Activated B cell treated with CpG ODN at 0.5 μM for 24 hours (primary cell): ENCODE measurements at regions of chr11 and their contacts with region 1.

Region 1: GRCh38 chr11:47269002-47269828 is 718 bp upstream of the MADD start:
- DNase-seq: peak; percentile 88
- ATAC-seq: peak; percentile 62
- H3K4me3 Mint-ChIP-seq: peak overlapping the region; percentile 93
- H3K27ac Mint-ChIP-seq: peak overlapping the region; percentile 97
- H3K4me1 Mint-ChIP-seq: peaks cover 59% of the 10 kb centered on the region
- H3K27me3 Mint-ChIP-seq: no peaks in the 10 kb centered on the region
- CTCF ChIP-seq: no peak

Region 2: DNA sequence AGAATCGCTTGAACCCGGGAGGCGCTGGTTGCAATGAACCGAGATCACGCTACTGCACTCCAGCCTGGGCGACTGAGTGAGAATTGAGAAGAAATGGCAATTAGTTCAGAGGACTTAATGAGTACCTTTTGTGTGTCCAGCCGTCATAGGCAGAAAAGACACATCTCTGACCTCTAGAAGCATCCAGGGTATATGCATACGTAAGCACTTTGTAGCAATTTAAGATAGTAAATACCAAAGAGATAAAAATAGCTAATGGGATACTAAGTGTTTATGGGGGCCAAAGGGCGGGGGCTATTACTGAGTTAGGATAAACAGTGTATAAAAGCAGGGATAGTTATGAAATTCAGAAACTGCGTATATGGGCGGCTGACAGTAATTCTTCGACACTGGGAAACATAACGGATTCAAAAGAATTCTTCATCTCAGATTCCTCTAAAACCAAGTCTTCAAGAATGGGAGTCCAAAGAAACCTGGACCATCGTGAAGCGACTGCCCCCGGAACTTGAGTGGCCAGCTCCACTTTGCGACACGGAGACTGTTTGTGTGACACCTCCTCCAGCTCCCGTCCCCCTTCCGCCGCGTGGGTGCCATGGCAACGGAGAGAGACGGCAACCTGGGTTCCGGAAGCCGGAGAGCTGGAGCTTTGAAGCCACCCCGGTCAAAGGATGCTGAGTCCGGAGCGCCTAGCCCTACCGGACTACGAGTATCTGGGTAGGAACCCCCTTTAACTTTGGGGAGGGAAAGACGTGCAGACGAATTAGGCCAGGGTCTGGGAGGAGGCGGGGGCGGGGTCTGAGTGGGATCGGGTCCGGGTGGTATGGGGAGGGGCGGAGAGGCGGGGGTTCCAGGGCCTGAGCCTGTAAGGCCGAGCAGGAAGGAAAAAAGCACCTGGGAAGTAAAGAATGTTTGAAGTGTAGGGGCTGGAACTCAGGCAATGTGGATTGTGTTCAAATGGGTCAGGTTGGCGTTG is 332.8 kb before region 1 on chr11 and contains the start of gene CSTPP1:
- CTCF ChIA-PET with region 1: no interaction called
- POLR2A ChIA-PET with region 1: no interaction called
- intact Hi-C with region 1: loop called (anchors 2 kb)
- DNase-seq: peak; percentile 88
- ATAC-seq: peak; percentile 97
- H3K4me3 Mint-ChIP-seq: peak within 1 kb of the TSS; percentile 99
- H3K27ac Mint-ChIP-seq: peak within 1 kb of the TSS; percentile 93
- H3K4me1 Mint-ChIP-seq: peaks cover 17% of the 10 kb centered on the region
- H3K27me3 Mint-ChIP-seq: peaks cover 10% of the 10 kb centered on the region
- CTCF ChIP-seq: no peak
- total RNA-seq, gene CSTPP1: 26.2 and 29.9 TPM in 2 replicates

Region 3: GRCh38 chr11:47248664-47249377 is 20.4 kb before region 1 on chr11 and contains the start of gene ACP2:
- CTCF ChIA-PET with region 1: interaction called, 4 read pairs
- POLR2A ChIA-PET with region 1: interaction called, 17 read pairs
- intact Hi-C with region 1: loop called (anchors 1 kb)
- DNase-seq: peak; percentile 82
- ATAC-seq: peak; percentile 96
- H3K4me3 Mint-ChIP-seq: peak within 1 kb of the TSS; percentile 98
- H3K27ac Mint-ChIP-seq: peak within 1 kb of the TSS; percentile 98
- H3K4me1 Mint-ChIP-seq: peaks cover 21% of the 10 kb centered on the region
- H3K27me3 Mint-ChIP-seq: no peaks in the 10 kb centered on the region
- CTCF ChIP-seq: no peak
- total RNA-seq, gene ACP2: 18.7 and 22.5 TPM in 2 replicates

Region 4: GRCh38 chr11:47399860-47400767 is 130.9 kb after region 1 on chr11:
- CTCF ChIA-PET with region 1: no interaction called
- POLR2A ChIA-PET with region 1: interaction called, 4 read pairs
- intact Hi-C with region 1: loop called (anchors 2 kb)
- DNase-seq: peak; percentile 56
- ATAC-seq: peak; percentile 79
- H3K4me3 Mint-ChIP-seq: peak overlapping the region; percentile 88
- H3K27ac Mint-ChIP-seq: peak overlapping the region; percentile 95
- H3K4me1 Mint-ChIP-seq: peaks cover 47% of the 10 kb centered on the region
- H3K27me3 Mint-ChIP-seq: no peaks in the 10 kb centered on the region
- CTCF ChIP-seq: no peak

Region 5: DNA sequence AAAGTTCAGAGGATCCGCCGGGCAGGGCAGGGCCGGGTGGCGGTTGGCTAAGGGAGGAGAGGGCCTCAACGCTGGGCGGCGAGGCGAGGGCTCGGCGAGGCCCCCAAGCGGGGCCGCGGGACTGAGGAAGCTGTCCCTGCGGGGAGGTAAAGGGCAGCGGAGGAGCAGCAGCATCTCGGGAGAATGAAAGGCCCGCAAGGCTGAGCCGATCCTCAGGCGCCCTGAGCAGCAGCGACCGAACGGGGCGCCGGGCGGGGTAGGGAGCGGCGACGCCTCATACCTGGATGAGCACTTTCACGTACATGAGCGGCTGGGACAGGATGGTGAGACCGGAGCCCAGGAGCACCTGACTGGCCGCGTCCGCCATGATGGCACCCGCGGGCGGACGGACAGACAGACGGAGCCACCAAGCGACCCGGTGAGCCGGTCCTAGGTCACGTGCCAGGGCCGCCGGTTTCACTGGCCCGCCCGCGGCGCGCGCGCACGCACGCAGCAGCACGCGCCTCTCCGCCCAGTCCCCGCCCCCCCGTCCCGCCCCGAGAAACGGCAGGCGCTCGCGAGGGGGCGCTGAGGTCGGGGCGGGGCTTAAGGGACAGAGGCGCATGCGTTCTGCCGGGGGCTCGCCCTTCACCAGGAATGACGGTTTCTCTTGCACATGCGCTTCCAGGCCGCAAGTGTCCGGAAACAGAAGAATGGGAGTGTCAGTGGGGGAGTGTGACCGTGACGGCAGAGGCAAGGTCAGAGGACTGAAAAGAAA is 373.1 kb after region 1 on chr11 and contains the start of gene MTCH2:
- CTCF ChIA-PET with region 1: no interaction called
- POLR2A ChIA-PET with region 1: no interaction called
- intact Hi-C with region 1: loop called (anchors 5 kb)
- DNase-seq: peak; percentile 95
- ATAC-seq: peak; percentile 94
- H3K4me3 Mint-ChIP-seq: peak within 1 kb of the TSS; percentile 94
- H3K27ac Mint-ChIP-seq: peak within 1 kb of the TSS; percentile 95
- H3K4me1 Mint-ChIP-seq: peaks cover 25% of the 10 kb centered on the region
- H3K27me3 Mint-ChIP-seq: no peaks in the 10 kb centered on the region
- CTCF ChIP-seq: no peak
- total RNA-seq, gene MTCH2: 73.3 and 81.7 TPM in 2 replicates

Region 6: GRCh38 chr11:47766305-47767227 is 497.4 kb after region 1 on chr11:
- CTCF ChIA-PET with region 1: no interaction called
- POLR2A ChIA-PET with region 1: interaction called, 4 read pairs
- intact Hi-C with region 1: loop called (anchors 1 kb)
- DNase-seq: peak; percentile 63
- ATAC-seq: peak; percentile 20
- H3K4me3 Mint-ChIP-seq: peak overlapping the region; percentile 97
- H3K27ac Mint-ChIP-seq: peak overlapping the region; percentile 100
- H3K4me1 Mint-ChIP-seq: peaks cover 33% of the 10 kb centered on the region
- H3K27me3 Mint-ChIP-seq: no peaks in the 10 kb centered on the region
- CTCF ChIP-seq: no peak